ENCODE measurements at regions of chr2 and their contacts with region 1.

Region 1: DNA sequence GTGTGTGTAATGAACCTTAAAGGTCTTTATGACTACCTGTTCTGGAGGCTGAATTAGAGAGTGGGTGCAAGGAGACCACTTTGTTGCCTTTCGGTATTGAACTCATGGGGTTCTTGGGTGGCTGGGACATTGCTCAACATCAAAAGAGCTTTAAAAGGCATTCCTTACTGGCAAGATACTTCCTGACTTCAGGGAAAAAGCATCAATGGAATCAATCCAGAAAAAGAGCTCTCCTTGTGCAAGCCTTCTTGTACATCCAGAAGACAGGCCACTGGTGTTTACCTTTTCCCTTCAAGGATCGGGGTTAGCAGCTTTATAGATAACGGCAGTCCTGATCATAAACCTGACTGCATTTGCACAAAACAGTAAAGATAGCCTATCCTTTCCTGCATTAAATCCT is 9.5 kb downstream of the PNO1 start:
- DNase-seq: no peak
- H3K4me3 ChIP-seq: no peak overlapping the region
- H3K27ac ChIP-seq: no peak overlapping the region
- H3K4me1 ChIP-seq: no peaks in the 10 kb centered on the region
- H3K27me3 ChIP-seq: no peaks in the 10 kb centered on the region
- CTCF ChIP-seq: no peak

Region 2: GRCh38 chr2:68185541-68186164 is 18.5 kb after region 1 on chr2:
- intact Hi-C with region 1: loop called (anchors 2 kb)
- DNase-seq: no peak
- H3K4me3 ChIP-seq: no peak overlapping the region
- H3K27ac ChIP-seq: no peak overlapping the region
- H3K4me1 ChIP-seq: peaks cover 6% of the 10 kb centered on the region
- H3K27me3 ChIP-seq: no peaks in the 10 kb centered on the region
- CTCF ChIP-seq: peak; percentile 59